Activated CD4-positive, alpha-beta T cell treated with anti-CD3 and anti-CD28 coated beads for 36 hours (primary cell): ENCODE measurements at regions of chr19 and their contacts with region 1.

Region 1: GRCh38 chr19:15125232-15126067 is 18.2 kb downstream of the SYDE1 start:
- DNase-seq: peak; percentile 99
- ATAC-seq: peak; percentile 91
- H3K4me3 Mint-ChIP-seq: peak overlapping the region; percentile 87
- H3K27ac Mint-ChIP-seq: peak overlapping the region; percentile 96
- H3K4me1 Mint-ChIP-seq: peaks cover 32% of the 10 kb centered on the region
- H3K27me3 Mint-ChIP-seq: no peaks in the 10 kb centered on the region

Region 2: GRCh38 chr19:14529254-14530004 is 596.0 kb before region 1 on chr19 and contains the start of gene TECR:
- CTCF ChIA-PET with region 1: no interaction called
- POLR2A ChIA-PET with region 1: no interaction called
- intact Hi-C with region 1: loop called in 1 of 2 experiments (anchors 1 kb)
- DNase-seq: peak; percentile 100
- ATAC-seq: peak; percentile 98
- H3K4me3 Mint-ChIP-seq: peak within 1 kb of the TSS; percentile 83
- H3K27ac Mint-ChIP-seq: peak within 1 kb of the TSS; percentile 90
- H3K4me1 Mint-ChIP-seq: peaks cover 37% of the 10 kb centered on the region
- H3K27me3 Mint-ChIP-seq: no peaks in the 10 kb centered on the region
- total RNA-seq, gene TECR: 106 to 145 TPM

Region 3: DNA sequence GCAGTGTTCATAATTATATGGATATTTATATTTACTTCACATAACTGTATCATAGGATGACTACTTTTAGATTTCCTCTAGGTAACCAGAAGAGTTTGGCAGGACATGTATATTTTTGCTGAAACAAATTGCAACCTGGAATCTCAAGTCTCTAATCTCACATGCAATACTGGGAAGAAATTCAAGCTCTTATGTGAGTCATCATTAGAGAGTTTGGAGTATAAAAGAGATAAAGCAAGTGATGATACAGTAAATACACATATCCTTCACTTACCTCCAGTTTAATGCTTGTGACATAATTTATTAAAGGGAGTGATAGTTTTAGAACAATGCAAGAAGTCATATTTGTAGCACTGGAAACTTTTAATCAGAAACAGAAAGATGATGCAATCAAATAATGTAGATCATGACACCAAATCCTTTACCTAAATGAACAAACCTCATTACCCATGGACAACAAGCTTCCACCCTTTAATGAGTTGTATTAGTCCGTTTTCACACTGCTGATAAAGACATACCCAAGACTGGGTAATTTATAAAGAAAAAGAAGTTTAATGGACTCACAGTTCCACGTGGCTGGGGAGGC is 223.7 kb before region 1 on chr19:
- CTCF ChIA-PET with region 1: no interaction called
- POLR2A ChIA-PET with region 1: no interaction called
- intact Hi-C with region 1: no loop called
- DNase-seq: no peak
- ATAC-seq: no peak
- H3K4me3 Mint-ChIP-seq: no peak overlapping the region
- H3K27ac Mint-ChIP-seq: no peak overlapping the region
- H3K4me1 Mint-ChIP-seq: no peaks in the 10 kb centered on the region
- H3K27me3 Mint-ChIP-seq: peaks cover 23% of the 10 kb centered on the region

Region 4: DNA sequence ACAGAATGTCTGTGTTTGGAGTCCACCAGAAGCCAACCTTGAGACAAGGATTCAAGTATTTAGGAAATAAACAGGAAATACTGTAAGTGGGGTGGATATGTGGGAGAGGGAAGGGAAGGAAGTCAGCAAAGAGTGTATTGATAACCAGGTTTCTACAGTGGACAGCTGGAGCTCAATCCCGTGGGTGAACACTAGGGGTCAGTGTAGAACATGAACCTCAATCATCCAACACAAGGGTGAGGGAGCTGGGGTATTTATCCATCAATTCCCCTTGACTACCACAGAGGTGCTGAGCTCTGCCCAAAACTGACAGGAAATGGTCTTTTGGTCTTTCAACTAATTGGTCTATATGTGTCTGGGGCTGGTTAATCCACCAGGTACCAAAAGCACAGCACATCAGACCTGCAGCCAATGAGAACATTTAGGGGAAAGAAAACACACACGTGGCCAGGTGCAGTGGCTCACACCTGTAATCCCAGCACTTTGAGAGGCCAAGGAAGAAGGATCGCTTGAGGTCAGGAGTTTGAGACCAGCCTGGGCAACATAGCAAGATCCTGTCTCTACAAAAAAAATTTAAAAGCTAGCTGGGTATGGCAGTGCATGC is 23.9 kb before region 1 on chr19:
- CTCF ChIA-PET with region 1: interaction called, 13 read pairs
- POLR2A ChIA-PET with region 1: no interaction called
- intact Hi-C with region 1: no loop called
- DNase-seq: peak; percentile 80
- ATAC-seq: peak; percentile 95
- H3K4me3 Mint-ChIP-seq: no peak overlapping the region
- H3K27ac Mint-ChIP-seq: no peak overlapping the region
- H3K4me1 Mint-ChIP-seq: peaks cover under 1% of the 10 kb centered on the region
- H3K27me3 Mint-ChIP-seq: peaks cover 6% of the 10 kb centered on the region

Region 5: DNA sequence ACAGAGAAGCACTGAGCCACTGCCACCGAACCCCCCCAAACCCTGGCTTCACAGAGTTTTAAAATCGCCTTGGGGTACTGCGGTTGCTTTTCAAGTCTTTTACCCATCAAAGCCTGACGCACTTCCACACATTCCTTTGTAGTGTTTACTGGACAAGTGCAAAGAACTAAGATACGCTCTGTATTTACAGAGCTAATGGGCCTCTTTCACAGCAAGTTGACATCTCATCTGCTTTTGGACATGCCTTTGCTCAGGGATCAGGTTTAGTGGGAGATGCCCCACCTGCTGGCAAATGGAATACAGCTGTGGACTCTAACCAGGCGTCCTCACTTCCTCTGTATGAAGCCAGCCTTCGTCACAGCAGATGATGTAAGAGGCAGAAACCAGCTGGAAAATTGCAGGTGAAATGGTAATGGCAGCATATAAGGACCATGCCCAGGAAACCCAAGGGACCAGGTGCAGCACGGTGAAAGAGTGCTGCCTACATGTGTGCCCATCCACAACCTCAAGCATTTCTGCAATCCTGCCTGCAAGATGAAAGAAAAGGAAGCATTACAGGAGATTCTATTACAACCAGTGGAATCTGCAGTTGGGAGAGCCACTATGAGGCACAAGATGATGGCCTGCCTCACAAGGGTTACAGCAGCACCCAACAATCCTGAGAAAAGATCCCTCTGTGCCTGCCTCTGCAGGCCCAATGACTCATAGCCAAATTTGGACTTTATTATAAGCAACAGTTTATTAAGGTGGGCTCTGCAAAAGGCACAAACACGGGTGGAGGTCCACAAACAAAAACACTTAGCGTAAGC is 172.2 kb after region 1 on chr19:
- CTCF ChIA-PET with region 1: no interaction called
- POLR2A ChIA-PET with region 1: no interaction called
- intact Hi-C with region 1: loop called in 1 of 2 experiments (anchors 2 kb)
- DNase-seq: peak; percentile 55
- ATAC-seq: no peak
- H3K4me3 Mint-ChIP-seq: peak overlapping the region; percentile 30
- H3K27ac Mint-ChIP-seq: peak overlapping the region; percentile 91
- H3K4me1 Mint-ChIP-seq: peaks cover 97% of the 10 kb centered on the region
- H3K27me3 Mint-ChIP-seq: no peaks in the 10 kb centered on the region

Region 6: GRCh38 chr19:15323496-15324227 is 198.2 kb after region 1 on chr19:
- CTCF ChIA-PET with region 1: no interaction called
- POLR2A ChIA-PET with region 1: no interaction called
- intact Hi-C with region 1: no loop called
- DNase-seq: peak; percentile 37
- ATAC-seq: peak; percentile 73
- H3K4me3 Mint-ChIP-seq: no peak overlapping the region
- H3K27ac Mint-ChIP-seq: peak overlapping the region; percentile 77
- H3K4me1 Mint-ChIP-seq: peaks cover 85% of the 10 kb centered on the region
- H3K27me3 Mint-ChIP-seq: no peaks in the 10 kb centered on the region

Region 7: DNA sequence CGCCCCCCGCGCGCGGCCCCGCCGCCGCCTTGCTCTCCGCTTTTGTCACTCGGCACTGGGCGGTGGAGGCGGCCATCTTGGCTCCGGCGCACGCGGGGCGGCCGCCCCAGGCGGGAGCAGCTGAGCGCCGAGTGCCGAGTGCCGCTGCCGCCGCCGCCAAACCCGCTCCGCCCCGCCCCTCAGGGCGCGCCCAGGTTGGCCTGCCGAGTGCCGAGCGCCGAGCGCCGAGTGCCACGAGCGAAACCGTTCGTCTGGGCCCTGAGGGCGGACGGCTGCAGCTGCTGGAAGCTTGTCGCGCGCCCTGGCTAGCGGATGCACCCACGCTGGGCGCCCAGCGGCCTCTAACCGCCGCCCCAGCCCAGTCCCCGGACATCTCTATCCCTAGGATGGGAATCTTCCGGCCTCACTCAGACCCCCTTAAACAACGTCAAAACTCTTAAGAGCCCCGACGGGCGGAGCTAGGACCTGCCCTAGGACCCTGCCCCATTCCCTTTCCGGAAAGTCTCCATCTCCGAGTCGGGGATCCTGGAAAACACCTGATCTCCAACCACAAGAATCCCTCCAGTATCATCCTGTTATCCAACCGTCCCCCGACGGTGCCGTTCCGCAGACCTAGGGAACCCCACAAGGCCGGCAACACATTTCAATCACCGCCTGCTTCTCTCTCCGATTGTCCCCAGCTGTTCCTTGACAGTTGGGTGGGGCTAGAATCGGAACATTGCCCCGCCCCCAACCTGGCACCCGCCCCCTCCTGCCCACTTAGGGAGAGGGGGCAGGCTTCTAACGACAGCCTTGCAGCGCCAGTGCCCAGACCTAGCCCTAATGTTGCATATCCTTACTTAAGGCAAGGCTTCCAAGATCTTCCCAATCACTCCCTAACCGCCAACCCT is 307.4 kb after region 1 on chr19:
- CTCF ChIA-PET with region 1: interaction called, 4 read pairs
- POLR2A ChIA-PET with region 1: no interaction called
- intact Hi-C with region 1: loop called in 1 of 2 experiments (anchors 1 kb)
- DNase-seq: peak; percentile 97
- ATAC-seq: peak; percentile 87
- H3K4me3 Mint-ChIP-seq: peak overlapping the region; percentile 87
- H3K27ac Mint-ChIP-seq: peak overlapping the region; percentile 91
- H3K4me1 Mint-ChIP-seq: peaks cover 26% of the 10 kb centered on the region
- H3K27me3 Mint-ChIP-seq: no peaks in the 10 kb centered on the region

Region 8: GRCh38 chr19:16076154-16076957 is 950.9 kb after region 1 on chr19 and contains the start of gene TPM4:
- CTCF ChIA-PET with region 1: no interaction called
- POLR2A ChIA-PET with region 1: no interaction called
- intact Hi-C with region 1: loop called in 1 of 2 experiments (anchors 10 kb)
- DNase-seq: peak; percentile 94
- ATAC-seq: peak; percentile 42
- H3K4me3 Mint-ChIP-seq: peak within 1 kb of the TSS; percentile 99
- H3K27ac Mint-ChIP-seq: peak within 1 kb of the TSS; percentile 98
- H3K4me1 Mint-ChIP-seq: peaks cover 64% of the 10 kb centered on the region
- H3K27me3 Mint-ChIP-seq: no peaks in the 10 kb centered on the region
- total RNA-seq, gene TPM4: 362 to 416 TPM